ENCODE measurements at regions of chr3 and their contacts with region 1.

Region 1: DNA sequence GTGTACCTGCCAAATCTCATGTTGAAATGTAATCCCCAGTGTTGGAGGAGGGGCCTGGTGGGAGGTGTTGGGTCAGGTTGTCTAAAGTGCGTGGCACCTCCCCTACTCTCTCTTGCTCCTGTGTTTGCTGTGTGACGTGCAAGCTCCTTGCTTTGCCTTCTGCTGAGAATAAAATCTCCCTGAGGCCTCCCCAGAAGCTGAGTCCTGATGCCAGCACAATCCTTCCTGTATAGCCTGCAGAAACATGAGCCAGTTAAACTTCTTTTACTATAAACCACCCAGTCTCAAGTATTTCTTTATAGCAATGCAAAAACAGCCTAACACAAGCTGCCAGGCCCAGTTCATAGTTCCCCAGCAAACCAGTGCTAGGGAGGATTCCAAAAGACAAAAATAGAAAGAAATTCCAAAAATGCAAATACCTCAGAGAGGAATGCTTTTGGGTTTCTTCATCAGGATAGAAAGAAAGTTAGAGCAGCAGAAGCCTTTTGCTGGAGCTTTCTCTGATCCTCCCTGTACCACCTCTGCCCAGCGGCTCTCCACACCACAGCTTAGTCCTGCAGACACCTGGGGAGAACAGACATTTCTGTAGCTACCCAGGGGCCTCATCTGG is 25.9 kb upstream of the CDV3 start:
- DNase-seq: peak; percentile 83 to 88
- H3K4me3 ChIP-seq: no peak overlapping the region
- H3K4me3 Mint-ChIP-seq: peak overlapping the region; percentile 67
- H3K27ac Mint-ChIP-seq: peak overlapping the region; percentile 88
- H3K4me1 ChIP-seq: peaks cover 49% of the 10 kb centered on the region
- H3K4me1 Mint-ChIP-seq: peaks cover 47% of the 10 kb centered on the region
- H3K27me3 ChIP-seq: no peaks in the 10 kb centered on the region
- H3K27me3 Mint-ChIP-seq: no peaks in the 10 kb centered on the region
- CTCF ChIP-seq: no peak

Region 2: DNA sequence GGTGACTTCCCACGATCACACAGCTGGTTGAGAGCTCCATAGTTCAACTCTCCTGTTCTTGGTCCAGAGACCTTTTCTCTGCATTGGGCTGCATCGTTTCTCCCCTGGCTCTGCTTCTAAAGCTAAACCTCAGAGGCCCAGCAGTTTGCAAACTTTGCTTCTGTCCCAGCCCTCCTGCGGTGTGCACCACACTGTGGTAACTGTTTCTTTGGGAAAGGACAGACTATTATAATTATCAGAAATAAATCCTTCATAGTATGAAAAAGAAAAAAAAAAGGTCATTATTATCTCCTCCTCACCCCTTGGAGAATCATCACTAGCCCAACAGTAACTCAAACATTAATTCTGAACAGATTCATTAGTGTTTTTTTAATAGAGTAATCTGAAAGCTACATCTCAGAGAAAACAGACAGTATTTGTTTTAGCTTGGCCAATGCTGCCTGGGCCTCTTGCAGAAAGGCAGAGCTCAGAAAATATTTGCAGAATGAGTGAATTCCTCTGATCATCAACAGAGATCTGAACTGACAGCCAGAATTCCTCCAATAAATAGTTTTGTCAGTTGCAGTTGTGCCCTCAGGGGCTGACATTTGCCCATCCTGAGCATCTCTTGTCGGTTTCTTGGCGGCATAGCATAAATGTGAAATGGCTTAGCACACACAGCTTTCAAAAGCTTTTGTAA is 94.8 kb before region 1 on chr3:
- CTCF ChIA-PET with region 1: interaction called, 3 read pairs
- POLR2A ChIA-PET with region 1: no interaction called
- intact Hi-C with region 1: loop called (anchors 2 kb)
- DNase-seq: peak; percentile 80 to 82
- H3K4me3 ChIP-seq: no peak overlapping the region
- H3K4me3 Mint-ChIP-seq: peak overlapping the region; percentile 59
- H3K27ac Mint-ChIP-seq: peak overlapping the region; percentile 72
- H3K4me1 ChIP-seq: peaks cover 60% of the 10 kb centered on the region
- H3K4me1 Mint-ChIP-seq: peaks cover 48% of the 10 kb centered on the region
- H3K27me3 ChIP-seq: no peaks in the 10 kb centered on the region
- H3K27me3 Mint-ChIP-seq: no peaks in the 10 kb centered on the region
- CTCF ChIP-seq: no peak

Region 3: GRCh38 chr3:133494469-133494868 is 53.1 kb before region 1 on chr3:
- CTCF ChIA-PET with region 1: interaction called, 3 read pairs
- POLR2A ChIA-PET with region 1: no interaction called
- intact Hi-C with region 1: loop called (anchors 1 kb)
- DNase-seq: peak; percentile 70 to 76
- H3K4me3 ChIP-seq: no peak overlapping the region
- H3K4me3 Mint-ChIP-seq: no peak overlapping the region
- H3K27ac Mint-ChIP-seq: no peak overlapping the region
- H3K4me1 ChIP-seq: peaks cover 8% of the 10 kb centered on the region
- H3K4me1 Mint-ChIP-seq: peaks cover 9% of the 10 kb centered on the region
- H3K27me3 ChIP-seq: no peaks in the 10 kb centered on the region
- H3K27me3 Mint-ChIP-seq: no peaks in the 10 kb centered on the region
- CTCF ChIP-seq: peak; percentile 65 to 72

Region 4: DNA sequence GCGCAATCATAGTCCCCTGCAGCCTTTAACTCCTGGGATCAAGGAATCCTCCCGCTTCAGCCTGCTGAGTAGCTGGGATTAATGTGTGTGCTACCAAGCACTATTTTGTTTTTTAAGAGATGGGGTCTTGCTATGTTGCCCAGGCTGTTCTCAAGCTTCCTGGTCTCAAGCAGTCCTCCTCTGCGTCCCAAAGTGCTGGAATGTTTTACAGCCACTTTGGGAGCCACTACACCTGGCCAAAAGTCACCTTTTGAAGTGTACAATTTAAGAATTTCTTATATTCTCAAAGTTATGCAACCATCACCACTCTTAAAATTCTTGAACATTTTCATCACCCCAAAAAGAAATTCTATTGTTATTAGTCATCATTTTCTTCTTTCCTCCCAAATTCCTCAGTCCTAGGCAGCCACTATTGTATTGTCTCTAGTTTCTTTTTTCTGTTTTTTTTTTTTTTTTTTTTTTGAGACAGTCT is 43.8 kb after region 1 on chr3:
- CTCF ChIA-PET with region 1: no interaction called
- POLR2A ChIA-PET with region 1: no interaction called
- intact Hi-C with region 1: loop called (anchors 1 kb)
- DNase-seq: peak in 1 of 2 experiments; percentile 23
- H3K4me3 ChIP-seq: no peak overlapping the region
- H3K4me3 Mint-ChIP-seq: no peak overlapping the region
- H3K27ac Mint-ChIP-seq: peak overlapping the region; percentile 59
- H3K4me1 ChIP-seq: peaks cover 8% of the 10 kb centered on the region; the same call in 1 of the 2 replicates
- H3K4me1 Mint-ChIP-seq: peaks cover 28% of the 10 kb centered on the region
- H3K27me3 ChIP-seq: no peaks in the 10 kb centered on the region
- H3K27me3 Mint-ChIP-seq: no peaks in the 10 kb centered on the region
- CTCF ChIP-seq: no peak

Measured in Caco-2 (cell line).